GM13976 (cell line): ENCODE measurements at regions of chr15 and their contacts with region 1.

Region 1: DNA sequence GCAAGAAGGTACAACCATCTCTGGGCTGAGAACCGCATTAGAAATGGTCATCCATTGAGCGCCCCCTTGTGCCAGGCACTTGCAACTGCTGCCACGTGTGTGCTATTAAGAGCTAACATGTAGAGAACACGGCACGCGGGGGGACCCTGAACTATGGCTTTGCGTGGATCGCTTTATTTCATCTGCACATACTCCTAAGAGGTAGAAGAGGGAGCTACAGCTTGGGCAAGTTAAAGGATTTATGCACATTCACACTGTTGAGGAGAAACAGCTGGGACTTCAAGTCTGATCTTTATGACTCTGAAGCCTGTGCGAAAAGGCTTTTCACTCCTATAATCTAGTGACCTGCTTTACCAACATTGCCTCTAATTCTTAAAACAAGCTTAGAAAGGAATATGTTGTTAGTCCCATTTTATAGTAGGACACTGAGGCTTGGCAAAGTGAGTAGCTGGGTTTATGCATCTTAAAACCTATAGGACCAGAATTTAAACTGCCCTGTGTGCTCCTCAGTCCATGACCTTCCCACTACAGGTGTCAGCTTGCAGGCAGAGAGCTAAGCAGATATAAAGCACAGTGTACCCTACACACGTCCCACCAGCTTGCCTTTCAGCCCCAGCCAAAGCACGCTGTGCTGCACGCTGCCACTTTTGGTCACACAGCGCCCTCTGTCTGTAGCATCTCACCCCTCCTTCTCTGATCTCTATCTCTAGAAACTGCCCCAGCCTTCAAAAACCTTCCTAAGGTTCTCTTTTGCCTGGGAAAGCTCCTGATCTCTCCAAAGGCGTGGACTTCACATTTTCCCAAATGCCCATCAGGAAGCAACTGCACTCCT is 57.8 kb downstream of the STARD5 start:
- DNase-seq: peak; percentile 80
- CTCF ChIP-seq: peak; percentile 98

Region 2: GRCh38 chr15:80776420-80777045 is 489.6 kb before region 1 on chr15:
- in situ Hi-C with region 1: loop called (anchors 25 kb)
- DNase-seq: peak; percentile 79
- CTCF ChIP-seq: peak; percentile 84

Region 3: GRCh38 chr15:80989518-80990478 is 276.4 kb before region 1 on chr15 and contains the start of gene MESD:
- in situ Hi-C with region 1: loop called (anchors 25 kb)
- DNase-seq: peak; percentile 99
- CTCF ChIP-seq: no peak

Region 4: DNA sequence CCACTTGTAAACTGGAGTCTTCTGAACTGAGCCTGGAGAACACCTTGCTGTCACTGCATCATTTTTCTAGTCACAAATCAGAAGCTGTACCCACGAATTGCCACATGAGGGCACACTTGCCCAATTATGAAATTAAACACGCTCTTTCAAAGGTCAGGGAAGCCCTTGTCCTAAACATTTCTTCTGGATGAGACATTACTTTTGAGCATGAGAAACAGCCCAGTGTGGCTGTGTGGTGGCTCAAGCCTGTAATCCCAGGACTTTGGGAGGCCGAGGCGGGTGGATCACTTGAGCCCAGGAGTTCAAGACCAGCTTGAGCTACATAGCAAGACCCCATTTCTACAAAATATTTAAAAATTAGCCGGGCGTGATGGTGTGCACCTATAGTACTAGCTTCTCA is 159.6 kb before region 1 on chr15:
- in situ Hi-C with region 1: loop called (anchors 5 kb)
- DNase-seq: peak; percentile 69
- CTCF ChIP-seq: peak; percentile 72

Region 5: DNA sequence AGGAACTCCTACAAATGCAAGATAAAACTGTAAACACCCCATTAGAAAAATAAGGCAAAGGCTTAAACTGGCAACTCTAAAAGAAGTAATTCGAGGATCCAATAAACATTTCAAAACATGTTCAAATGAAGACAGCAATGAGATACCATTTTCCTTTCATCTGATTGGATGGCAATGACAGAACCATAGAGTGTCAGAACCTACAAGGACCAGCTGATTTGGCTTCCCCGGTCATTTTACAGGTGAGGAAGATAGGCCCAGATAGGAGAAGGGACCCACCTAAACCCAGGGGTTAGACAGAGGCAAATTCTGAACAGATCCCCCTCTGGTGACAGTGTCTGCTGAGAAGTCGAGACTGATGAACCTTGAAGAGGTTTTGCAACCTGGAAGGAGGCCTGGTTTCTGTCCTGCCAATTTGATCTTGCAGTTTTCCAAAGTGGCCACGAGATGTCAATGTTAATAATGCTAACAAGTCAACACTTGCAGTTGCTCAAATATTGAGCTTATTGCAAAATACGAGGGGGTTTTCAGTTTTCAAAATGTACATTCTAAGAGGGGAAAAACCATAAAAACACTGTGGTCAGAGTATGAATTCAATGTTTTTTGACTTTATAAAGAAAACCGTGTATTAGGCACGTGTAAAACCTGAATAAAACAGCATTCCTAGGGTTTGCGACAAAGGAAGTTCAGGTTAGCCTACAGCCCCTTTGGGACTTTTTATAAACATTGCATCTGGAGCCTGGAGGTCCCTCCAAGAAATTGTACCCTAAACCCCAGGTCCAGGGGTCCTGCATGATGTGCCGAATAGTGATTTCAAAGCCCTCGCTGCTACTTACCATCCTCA is 110.6 kb before region 1 on chr15:
- in situ Hi-C with region 1: loop called (anchors 5 kb)
- DNase-seq: peak; percentile 53
- CTCF ChIP-seq: peak; percentile 50

Region 6: DNA sequence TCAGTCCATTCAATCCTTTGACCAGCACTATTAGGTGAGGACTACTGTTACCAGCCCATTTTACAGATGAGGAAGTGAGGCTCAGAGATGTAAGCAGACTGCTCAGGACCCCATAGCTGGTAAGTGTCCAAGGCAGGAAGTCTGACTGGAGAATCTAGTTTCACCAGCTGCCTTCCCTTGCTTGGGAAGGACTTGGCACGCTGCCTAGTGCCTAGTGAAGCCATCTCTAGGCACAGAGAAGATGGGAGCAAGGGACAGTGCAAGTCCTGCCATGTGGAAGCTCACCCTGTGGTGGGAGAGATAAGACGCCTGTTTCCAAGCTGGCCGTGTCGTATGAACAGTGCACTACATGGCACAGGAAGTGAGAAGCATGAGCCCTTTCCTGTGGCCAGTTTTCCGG is 219.6 kb after region 1 on chr15:
- in situ Hi-C with region 1: no loop called
- DNase-seq: no peak
- CTCF ChIP-seq: no peak